GM13977 (cell line): ENCODE measurements at regions of chr6 and their contacts with region 1.

Region 1: DNA sequence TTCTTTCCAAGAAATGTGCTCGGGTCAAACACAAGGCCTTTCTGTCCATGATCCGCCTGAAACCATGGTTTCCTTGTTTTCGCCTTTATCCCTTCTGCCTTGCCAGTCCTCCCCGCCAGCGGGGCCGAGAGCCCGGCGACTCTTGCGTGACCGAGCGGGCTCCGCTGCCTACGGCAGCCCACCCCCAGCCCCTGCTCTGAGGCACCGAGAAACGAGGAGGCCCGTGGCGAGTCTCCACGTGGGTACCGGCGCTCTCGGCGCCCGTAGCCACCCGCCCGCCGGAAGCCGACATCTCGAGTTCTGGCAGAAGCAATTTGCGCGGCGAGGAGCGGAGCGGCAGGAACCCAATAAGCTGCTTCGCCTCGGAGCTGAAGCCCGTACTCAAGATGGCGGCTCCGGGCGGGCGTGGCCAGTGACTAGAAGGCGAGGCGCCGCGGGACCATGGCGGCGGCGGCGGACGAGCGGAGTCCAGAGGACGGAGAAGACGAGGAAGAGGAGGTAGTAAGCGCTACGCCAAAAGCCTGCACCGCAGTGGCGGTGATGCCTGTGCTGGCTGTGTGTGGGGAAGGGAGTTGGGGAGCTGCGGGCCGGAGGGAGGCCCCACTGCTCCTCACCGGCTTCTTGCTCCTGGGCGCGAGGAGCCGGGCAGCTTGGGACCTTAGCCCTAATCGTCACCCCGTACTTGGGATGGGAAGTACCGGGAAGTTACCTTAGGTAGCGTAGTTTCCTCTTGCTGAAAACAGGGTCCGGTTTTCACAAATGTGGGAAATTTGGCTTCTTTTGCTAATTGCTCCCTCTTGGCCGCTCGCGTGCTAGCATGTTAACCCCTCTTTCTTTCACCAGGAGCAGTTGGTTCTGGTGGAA is at the start of gene GTF3C6:
- DNase-seq: peak; percentile 89
- CTCF ChIP-seq: no peak

Region 2: DNA sequence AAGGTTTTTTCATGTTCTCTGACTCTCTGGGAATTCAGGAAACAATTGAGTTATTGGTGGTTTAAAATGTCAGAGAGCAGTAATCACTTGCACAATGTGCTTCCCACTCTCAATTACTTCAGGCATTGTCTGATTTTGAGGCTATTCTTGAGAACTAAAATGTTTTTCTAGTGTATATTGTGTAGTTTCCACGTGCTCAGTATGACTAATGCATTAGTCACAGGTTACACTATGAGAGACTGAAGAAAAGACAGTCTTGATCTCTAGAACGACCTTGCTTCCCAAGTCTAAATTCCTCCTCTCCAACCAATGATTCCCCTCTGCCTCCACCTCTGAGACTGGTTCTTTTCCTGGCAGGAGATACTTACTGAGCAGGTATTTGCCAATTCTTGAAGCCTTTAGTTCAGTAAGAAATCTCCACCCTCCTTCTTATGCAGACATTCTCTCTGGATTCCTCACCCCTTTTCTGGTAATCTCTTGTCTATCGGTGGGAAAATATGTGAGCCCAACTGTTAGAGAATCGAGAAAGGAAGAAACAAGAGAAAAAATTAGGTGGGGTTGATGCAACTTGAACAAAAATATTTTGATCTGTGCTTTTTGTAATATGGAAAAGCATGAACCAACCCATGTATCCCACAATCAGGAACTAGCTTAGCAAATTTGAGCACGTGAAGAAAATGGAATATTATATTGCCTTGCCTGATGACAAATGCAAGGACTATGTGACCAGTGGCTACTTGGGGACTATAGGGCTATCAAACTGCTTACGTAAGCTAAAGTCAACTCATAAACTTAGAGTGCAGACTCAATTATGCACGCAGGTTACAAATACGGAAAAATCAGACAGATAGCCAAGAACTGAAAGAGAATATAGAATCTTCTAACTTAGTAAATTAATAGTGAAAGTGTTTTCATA is 421.1 kb before region 1 on chr6:
- in situ Hi-C with region 1: loop called (anchors 10 kb)
- DNase-seq: peak; percentile 30
- CTCF ChIP-seq: no peak

Region 3: DNA sequence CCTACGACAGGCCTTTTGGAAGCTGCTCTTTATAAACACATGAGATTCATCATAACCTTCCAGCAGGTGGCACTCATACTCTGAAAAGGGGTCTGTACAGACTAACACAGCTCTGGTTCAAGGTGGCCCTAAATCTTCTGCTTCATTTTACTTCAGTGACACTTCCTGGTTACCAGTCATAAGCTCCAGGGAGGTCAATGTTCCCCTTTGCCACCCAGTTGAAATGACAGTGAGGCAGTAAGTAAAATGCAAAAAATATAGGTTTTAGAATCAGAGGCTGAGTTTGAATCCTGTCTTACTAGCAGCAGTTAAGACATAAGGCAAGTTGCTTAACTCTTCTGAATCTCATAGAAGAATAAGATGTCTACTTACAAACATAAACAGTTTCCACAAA is 276.1 kb before region 1 on chr6:
- in situ Hi-C with region 1: loop called (anchors 10 kb)
- DNase-seq: peak; percentile 66
- CTCF ChIP-seq: peak; percentile 59

Region 4: DNA sequence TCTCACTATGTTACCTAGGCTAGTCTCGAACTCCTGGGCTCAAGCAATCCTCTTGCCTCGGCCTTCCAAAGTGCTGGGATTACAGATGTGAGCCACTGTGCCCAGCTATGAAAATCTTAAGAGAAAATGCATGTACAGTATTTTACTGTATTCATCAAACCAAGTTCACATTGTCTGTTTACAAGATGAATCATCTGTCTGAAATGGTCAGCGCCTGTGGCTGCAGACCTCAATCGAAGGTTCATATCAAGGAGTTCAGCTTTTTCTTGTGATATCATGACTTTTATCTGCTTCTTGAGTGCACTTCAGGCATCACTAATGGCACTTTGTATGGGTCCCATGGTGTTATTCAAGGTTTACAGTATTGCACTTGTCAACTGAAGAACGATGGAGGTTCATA is 283.9 kb after region 1 on chr6:
- in situ Hi-C with region 1: no loop called
- DNase-seq: no peak
- CTCF ChIP-seq: no peak